H1 (cell line): ENCODE measurements at regions of chr2 and their contacts with region 1.

Region 1: GRCh38 chr2:219155054-219155644 is 5.5 kb downstream of the NHEJ1 start:
- DNase-seq: no peak
- H3K4me3 ChIP-seq: no peak overlapping the region
- H3K27ac ChIP-seq: no peak overlapping the region
- H3K4me1 ChIP-seq: peaks cover 0 to 5% (median 2%) of the 10 kb centered on the region in 4 experiments; a peak in 2 of 7 replicates
- H3K27me3 ChIP-seq: no peaks in the 10 kb centered on the region
- CTCF ChIP-seq: peak in 2 of 3 experiments; percentile 45 to 70; a peak in 3 of 4 replicates
- EP300 ChIP-seq: no peak
- POLR2A ChIP-seq: no peak
- RAD21 ChIP-seq: peak; percentile 79 to 87

Region 2: DNA sequence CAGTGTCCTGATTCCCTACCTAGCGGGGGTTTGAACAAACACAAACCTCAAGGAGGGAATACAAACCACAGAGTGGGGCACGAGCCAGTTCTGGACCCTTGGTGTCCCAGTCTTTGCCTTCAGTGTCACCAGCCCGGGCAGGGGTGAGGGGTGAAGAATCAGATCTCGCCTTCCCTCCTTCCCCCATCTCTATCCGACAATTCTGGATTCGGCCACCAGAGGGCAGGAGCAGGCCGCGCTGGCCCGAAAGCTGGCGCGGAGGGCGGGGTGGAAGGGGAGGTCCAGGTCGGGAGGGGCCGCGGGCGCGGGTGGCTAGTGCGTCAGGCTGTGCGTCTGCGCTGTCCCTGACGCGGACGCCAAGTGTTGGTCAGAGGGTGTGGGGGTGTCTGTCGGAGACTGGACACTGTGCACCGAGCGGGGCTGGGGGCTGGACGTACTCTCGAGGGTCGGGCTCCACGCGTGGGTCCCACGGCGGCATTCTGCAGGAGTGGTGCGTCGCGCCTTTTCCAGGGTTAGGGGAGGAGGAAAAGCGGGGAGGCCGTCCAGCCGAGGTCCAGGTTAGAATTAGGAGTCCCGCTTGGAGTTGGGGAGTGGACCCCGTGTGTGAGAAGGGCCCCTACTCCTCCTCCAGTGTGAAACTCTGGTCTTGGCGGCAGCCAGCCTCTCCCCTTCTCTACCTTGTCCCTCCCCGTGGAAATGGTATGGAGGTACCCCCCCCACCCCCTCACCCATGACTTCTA is 159.0 kb before region 1 on chr2:
- CTCF ChIA-PET with region 1: interaction called, 12 read pairs
- POLR2A ChIA-PET with region 1: no interaction called
- DNase-seq: peak in 1 of 2 experiments; percentile 99
- H3K4me3 ChIP-seq: peak overlapping the region in 3 of 4 experiments; percentile 27 to 49 (median 34); a peak in 4 of 8 replicates
- H3K27ac ChIP-seq: no peak overlapping the region
- H3K4me1 ChIP-seq: peaks cover 0 to 43% (median 26%) of the 10 kb centered on the region in 4 experiments; a peak in 6 of 7 replicates
- H3K27me3 ChIP-seq: peaks cover 98 to 100% (median 99%) of the 10 kb centered on the region in 4 experiments
- CTCF ChIP-seq: peak in 2 of 3 experiments; percentile 88; a peak in 3 of 4 replicates
- EP300 ChIP-seq: 0 out of 3 replicates have a peak, but pooled peaks of 1 of the 2 experiments have one; percentile 20
- POLR2A ChIP-seq: no peak
- RAD21 ChIP-seq: peak; percentile 79 to 89

Region 3: DNA sequence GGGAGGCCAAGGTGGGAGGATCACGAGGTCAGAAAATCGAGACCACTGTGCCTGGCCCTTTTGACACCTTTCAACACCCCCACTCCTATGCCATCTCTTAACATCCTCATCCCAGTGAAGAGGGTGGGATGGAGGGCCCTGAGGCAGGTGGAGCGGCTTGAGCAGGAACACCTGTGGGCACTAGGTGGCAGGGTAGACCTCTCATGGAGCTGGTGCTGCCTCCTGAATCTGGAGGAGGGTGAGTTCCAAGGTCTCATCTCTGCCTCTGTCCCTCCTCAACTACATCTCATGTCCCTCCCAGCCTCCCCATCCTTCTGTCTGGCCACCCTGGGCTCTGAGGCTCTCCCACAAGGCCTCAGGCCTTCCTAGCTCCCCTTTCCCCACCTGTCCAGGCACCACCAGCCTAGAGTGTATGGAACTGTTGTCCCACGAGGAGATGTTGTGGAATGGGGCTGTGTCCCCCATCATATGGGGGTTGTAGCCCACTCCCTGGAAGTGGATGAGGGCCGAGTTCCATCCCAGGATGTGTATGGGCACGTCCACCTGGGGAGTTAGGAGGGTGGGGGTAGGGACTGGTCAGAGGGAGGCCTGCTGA is 144.9 kb before region 1 on chr2:
- CTCF ChIA-PET with region 1: interaction called, 18 read pairs
- POLR2A ChIA-PET with region 1: no interaction called
- DNase-seq: no peak
- H3K4me3 ChIP-seq: no peak overlapping the region
- H3K27ac ChIP-seq: no peak overlapping the region
- H3K4me1 ChIP-seq: no peaks in the 10 kb centered on the region
- H3K27me3 ChIP-seq: peaks cover 1 to 21% (median 10%) of the 10 kb centered on the region in 4 experiments
- CTCF ChIP-seq: peak; percentile 67 to 85 (median 81)
- EP300 ChIP-seq: no peak
- POLR2A ChIP-seq: no peak
- RAD21 ChIP-seq: peak; percentile 69 to 75

Region 4: DNA sequence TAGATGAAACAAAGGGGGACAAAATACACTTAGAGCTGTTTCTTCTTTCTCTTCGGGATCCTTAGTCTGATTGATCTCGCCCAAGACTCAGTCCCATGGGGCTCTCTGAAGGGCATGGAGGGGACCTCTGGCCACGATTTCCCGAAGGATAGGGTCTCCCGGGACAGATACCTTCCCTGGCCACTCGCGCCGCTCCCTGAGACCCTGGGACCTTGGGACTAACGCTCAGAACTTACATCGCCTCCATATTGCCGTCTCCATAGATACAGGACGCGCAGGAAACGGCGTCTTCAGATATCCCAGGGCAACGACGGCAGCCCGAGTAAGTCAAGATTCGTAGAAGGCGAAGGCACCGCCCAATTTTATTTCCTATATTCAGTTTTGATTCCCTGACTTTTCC is 113.9 kb before region 1 on chr2 and contains the start of gene CFAP65:
- CTCF ChIA-PET with region 1: interaction called, 18 read pairs
- POLR2A ChIA-PET with region 1: interaction called, 4 read pairs
- DNase-seq: peak in 1 of 2 experiments; percentile 86
- H3K4me3 ChIP-seq: peak within 1 kb of the TSS; percentile 52 to 65 (median 60)
- H3K27ac ChIP-seq: no peak within 1 kb of the TSS
- H3K4me1 ChIP-seq: peaks cover 0 to 3% (median 0%) of the 10 kb centered on the region in 4 experiments; a peak in 1 of 7 replicates
- H3K27me3 ChIP-seq: peaks cover 0 to 5% (median 0%) of the 10 kb centered on the region in 4 experiments; a peak in 1 of 7 replicates
- CTCF ChIP-seq: no peak
- EP300 ChIP-seq: no peak
- POLR2A ChIP-seq: no peak
- RAD21 ChIP-seq: no peak
- total RNA-seq, gene CFAP65: 0.13 and 0.19 TPM in 2 replicates

Region 5: DNA sequence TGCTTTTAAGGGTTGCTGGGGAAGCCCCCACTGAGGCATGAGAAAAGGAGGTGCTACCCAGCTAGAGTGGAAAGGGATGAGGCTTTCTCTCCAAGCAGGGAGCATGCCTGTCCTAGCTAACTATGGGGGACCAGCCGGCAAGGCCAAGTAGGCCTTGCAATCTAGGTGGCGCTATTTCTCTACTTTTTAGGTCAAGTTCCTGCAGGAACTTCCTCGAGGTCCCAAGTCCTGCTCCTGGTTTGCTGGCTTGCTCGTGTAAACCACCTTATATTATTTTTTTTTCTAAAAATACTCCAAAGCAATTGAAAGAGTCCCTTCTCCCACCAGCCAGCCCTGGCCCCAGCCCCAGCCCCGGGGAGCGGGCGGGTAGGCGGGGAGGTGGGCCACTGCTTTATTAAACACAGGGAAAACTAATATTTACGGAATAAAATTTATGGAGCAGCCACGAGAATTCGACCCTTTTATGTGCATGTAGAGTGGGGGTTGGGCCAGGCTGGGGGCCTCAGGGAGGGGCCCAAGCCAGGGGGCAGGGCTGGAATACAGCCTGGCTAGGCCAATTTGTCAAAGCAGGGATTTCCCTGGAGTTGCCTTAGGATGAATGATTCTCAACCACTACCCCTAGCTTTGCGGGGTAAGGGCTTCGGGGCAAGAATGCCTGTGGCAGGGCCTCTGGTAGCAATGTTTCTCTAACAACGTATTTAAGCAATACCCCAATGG is 81.6 kb before region 1 on chr2:
- CTCF ChIA-PET with region 1: interaction called, 99 read pairs
- POLR2A ChIA-PET with region 1: interaction called, 3 read pairs
- DNase-seq: peak in 1 of 2 experiments; percentile 63
- H3K4me3 ChIP-seq: peak overlapping the region in 1 of 4 experiments; percentile 41; a peak in 2 of 8 replicates
- H3K27ac ChIP-seq: no peak overlapping the region
- H3K4me1 ChIP-seq: 0 out of 7 replicates have a peak, but pooled peaks cover 0 to 3% (median under 1%) of the 10 kb centered on the region in 4 experiments
- H3K27me3 ChIP-seq: no peaks in the 10 kb centered on the region
- CTCF ChIP-seq: peak; percentile 70 to 87 (median 85)
- EP300 ChIP-seq: no peak
- POLR2A ChIP-seq: no peak
- RAD21 ChIP-seq: peak; percentile 77 to 84

Region 6: DNA sequence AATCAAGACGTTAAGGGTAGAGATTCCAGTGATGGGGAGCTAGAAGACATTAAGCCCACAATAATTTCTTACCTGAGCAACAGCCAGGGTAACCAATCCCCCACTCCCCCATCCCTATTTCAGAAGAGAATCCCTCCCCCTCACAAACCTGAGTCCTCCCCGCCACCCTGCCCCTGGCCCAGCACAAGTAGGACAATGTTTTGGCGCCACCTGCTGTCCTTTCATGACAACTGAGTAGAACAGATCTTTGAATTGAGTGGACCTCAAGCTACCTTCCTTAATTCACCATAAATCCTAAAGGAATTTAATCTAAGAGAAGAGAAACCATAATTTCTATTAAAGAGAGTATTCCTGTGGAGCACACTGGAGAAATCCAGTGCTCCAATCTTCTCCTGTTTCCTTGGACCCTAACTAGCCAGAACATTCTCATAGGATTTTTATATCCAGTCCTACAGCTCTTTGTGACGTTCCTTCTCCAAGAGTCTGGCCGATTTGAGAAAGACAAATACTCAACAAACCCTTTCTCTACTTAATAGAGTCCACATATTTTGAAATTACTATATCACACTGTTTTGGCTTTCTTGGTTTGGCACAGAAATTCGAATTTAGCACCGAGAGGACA is 35.6 kb before region 1 on chr2:
- CTCF ChIA-PET with region 1: interaction called, 21 read pairs
- POLR2A ChIA-PET with region 1: no interaction called
- DNase-seq: peak in 1 of 2 experiments; percentile 79
- H3K4me3 ChIP-seq: no peak overlapping the region
- H3K27ac ChIP-seq: no peak overlapping the region
- H3K4me1 ChIP-seq: no peaks in the 10 kb centered on the region; a peak in 2 of 7 replicates
- H3K27me3 ChIP-seq: no peaks in the 10 kb centered on the region
- CTCF ChIP-seq: peak; percentile 64 to 82 (median 67)
- EP300 ChIP-seq: no peak
- POLR2A ChIP-seq: no peak
- RAD21 ChIP-seq: peak; percentile 90 to 92

Region 7: DNA sequence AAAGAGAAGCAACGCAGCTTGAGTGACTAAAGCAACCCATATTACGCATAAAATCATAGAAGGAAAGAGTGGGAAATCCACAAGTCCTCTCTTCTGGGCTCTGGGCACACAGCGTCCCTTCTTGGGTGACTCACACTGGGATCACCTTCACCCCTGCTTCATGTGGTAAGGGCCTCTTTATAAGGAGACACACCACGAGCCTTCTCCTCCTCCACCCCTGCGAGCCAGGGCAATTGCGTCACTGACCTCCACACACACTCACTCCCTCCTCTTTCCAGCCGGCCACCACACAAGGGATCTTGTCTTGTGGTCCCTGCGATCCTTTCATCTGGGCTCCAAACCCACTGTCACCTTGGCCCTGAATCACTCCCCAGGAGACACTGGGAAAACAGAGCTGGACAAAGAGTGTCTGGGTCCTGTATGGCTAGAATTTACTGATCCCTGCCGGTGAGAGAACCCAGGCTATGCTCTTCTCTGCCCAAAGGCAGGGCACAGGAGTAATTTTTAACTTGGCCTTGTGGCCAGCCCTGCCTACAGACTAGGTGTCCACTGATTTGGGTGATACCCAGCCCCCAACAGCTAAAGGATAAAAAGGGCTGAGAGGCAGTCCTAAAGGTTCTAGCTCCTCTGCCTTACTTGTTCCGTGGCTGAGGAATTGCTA is 29.8 kb before region 1 on chr2:
- CTCF ChIA-PET with region 1: interaction called, 21 read pairs
- POLR2A ChIA-PET with region 1: no interaction called
- DNase-seq: no peak
- H3K4me3 ChIP-seq: no peak overlapping the region
- H3K27ac ChIP-seq: no peak overlapping the region
- H3K4me1 ChIP-seq: no peaks in the 10 kb centered on the region; a peak in 2 of 7 replicates
- H3K27me3 ChIP-seq: no peaks in the 10 kb centered on the region
- CTCF ChIP-seq: no peak
- EP300 ChIP-seq: no peak
- POLR2A ChIP-seq: no peak
- RAD21 ChIP-seq: no peak

Region 8: GRCh38 chr2:219344751-219345430 is 189.7 kb after region 1 on chr2:
- CTCF ChIA-PET with region 1: no interaction called
- POLR2A ChIA-PET with region 1: no interaction called
- DNase-seq: no peak
- H3K4me3 ChIP-seq: no peak overlapping the region
- H3K27ac ChIP-seq: no peak overlapping the region
- H3K4me1 ChIP-seq: no peaks in the 10 kb centered on the region
- H3K27me3 ChIP-seq: no peaks in the 10 kb centered on the region; a peak in 2 of 7 replicates
- CTCF ChIP-seq: no peak
- EP300 ChIP-seq: no peak
- POLR2A ChIP-seq: no peak
- RAD21 ChIP-seq: no peak

Region 9: DNA sequence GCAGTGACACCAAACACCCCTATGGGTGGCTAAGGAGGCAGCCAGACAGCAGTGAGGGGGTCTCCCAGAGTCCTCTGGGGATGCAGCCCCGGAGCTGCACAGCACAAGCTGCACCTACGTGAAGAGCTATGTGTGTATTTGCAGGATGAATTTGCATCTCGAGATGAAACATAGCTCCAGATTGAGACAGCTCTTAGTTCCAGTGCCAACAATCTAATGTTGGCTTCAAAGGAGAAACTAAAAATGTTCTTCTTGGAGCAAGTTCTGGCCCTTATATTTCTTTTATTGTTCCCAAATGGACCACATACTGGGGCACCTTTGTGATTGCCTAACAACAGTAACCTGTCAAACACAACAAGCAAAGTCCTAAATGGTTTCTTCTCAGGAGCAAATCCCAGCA is 706.2 kb after region 1 on chr2:
- CTCF ChIA-PET with region 1: no interaction called
- POLR2A ChIA-PET with region 1: no interaction called
- DNase-seq: no peak
- H3K4me3 ChIP-seq: no peak overlapping the region
- H3K27ac ChIP-seq: no peak overlapping the region
- H3K4me1 ChIP-seq: peaks cover 0 to 4% (median 0%) of the 10 kb centered on the region in 4 experiments; a peak in 1 of 7 replicates
- H3K27me3 ChIP-seq: peaks cover 0 to 1% (median 0%) of the 10 kb centered on the region in 4 experiments; a peak in 1 of 7 replicates
- CTCF ChIP-seq: no peak
- EP300 ChIP-seq: no peak
- POLR2A ChIP-seq: no peak
- RAD21 ChIP-seq: no peak